GM23248 (cell line): ENCODE measurements at regions of chr7 and their contacts with region 1.

Region 1: DNA sequence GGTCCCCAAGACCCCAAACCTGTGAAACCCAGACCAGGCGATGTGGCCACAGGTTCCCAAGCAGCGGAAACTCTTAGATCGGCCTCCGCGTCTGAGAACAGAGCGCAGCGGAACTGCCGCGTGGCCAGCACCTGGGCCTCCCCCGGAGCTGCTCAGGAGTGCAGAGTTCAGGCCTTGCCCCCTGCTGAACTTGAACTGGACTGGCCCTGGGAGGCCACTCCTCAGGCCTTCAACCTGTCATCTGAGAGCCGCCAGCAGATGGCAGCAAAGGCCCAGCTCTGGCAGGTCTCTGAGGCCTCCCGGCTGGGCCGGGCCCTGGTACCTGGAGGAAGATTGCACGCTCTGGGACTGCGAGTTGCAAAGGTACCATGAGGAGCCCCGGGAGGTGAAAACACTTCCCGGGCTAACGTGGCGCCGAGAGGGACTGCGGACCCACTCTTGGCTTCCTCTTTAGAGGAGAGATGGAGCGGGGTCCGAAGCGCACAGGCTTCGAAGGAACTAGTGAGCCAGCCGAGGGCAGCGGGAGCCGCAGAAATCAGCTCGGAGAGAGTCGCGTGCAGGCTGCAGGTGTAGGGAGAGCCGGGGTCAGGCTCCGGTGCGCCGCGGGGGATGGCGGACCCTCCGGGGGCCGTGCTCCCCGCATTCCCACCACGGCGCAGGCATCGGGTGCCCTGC is 89.1 kb downstream of the PAXIP1 start:
- DNase-seq: peak; percentile 76
- H3K4me3 ChIP-seq: peak overlapping the region; percentile 52
- H3K27ac ChIP-seq: no peak overlapping the region
- H3K4me1 ChIP-seq: no peaks in the 10 kb centered on the region
- H3K27me3 ChIP-seq: no peaks in the 10 kb centered on the region

Region 2: DNA sequence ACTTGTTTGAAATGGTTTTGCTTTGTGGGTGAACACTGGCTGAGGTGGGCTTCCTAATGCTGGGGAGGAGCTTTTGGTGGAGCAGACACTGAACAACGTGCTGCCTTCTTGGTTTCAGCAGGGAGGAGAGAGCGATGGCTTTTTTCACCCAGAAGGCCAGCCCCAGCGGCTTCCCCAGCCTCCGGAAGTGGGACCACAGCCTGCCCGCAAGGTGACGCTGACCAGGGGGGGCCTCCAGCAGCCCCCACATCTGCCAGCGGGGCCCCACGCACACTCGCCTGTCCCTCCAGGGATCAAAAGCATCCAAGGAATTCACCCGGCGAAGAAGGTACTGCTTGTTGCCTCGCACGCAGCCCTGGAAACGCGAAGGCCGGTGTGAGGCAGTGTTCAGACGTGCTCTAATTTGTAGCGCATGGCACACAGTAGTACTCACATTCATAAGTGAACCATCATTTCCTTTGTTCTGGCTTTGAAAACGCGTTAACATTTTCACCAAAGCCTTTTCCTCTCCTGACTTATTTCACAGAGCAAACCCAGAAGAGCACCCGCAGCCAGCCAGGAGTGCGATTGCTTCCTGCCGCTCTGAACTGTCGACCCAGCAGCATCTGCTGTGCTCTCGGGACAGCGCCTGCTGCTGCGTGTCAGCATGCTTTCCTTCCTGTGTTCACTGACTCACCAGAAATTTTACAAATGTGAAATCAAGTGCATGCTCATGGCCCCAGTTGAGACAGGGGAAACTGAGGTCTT is 850.1 kb after region 1 on chr7:
- in situ Hi-C with region 1: loop called (anchors 25 kb)
- DNase-seq: no peak
- H3K4me3 ChIP-seq: no peak overlapping the region
- H3K27ac ChIP-seq: no peak overlapping the region
- H3K4me1 ChIP-seq: no peaks in the 10 kb centered on the region
- H3K27me3 ChIP-seq: no peaks in the 10 kb centered on the region